ENCODE measurements at regions of chr17 and their contacts with region 1.

Region 1: GRCh38 chr17:38982858-38983746 is 15.9 kb upstream of the FBXO47 start:
- DNase-seq: no peak

Region 2: DNA sequence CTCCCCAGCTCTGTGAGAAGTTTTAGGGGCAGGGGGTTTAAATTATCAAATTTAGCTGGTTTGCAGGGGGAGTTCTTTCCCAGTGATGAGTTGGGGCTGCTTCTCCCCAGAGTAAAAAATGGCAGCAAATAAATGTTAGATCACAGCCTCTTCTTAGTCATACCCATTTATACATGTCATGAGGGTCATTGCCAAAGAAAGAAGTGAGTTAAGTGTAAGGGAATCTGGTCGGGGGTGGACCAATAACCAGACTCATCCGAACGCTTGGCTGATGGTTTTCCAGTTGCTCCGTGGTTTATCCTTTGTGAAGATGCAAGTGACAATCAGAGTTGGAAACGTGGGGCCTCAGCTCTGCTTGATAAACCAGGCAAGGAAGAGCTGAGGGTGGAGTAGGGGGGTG is 81.3 kb after region 1 on chr17:
- intact Hi-C with region 1: loop called (anchors 5 kb)
- DNase-seq: no peak

Measured in cardiac septum (tissue), 1 donor.